Adrenal gland (tissue), 19 donors: ENCODE measurements at regions of chr17 and their contacts with region 1.

Region 1: DNA sequence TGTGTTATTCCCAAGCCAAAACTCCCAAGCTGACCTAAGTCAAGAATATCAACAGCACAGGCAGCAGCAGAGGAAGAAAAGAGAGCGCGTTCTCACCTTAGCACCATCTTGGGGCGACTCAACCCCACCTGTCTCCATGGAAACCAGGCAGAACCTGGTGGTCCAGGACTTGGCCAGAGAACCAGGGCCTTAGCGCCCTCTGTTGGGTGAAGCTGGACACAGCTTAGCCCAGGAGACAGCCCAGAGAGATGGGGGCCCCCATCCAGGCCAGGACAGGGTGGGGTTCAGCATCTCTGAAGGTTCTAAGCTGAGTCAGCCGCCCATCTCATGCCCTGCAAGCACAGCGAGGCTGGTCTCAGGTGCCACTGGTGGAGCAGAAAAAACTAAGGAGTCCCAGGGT is 60.1 kb upstream of the TMEM132E start:
- DNase-seq: peak in 1 of 7 donors; percentile 10
- H3K4me3 ChIP-seq: no peak overlapping the region
- H3K27ac ChIP-seq: no peak overlapping the region
- H3K4me1 ChIP-seq: no peaks in the 10 kb centered on the region
- H3K27me3 ChIP-seq: no peaks in the 10 kb centered on the region
- CTCF ChIP-seq: peak in 5 of 6 experiments; percentile 28 to 49 (median 34)
- POLR2A ChIP-seq: no peak

Region 2: DNA sequence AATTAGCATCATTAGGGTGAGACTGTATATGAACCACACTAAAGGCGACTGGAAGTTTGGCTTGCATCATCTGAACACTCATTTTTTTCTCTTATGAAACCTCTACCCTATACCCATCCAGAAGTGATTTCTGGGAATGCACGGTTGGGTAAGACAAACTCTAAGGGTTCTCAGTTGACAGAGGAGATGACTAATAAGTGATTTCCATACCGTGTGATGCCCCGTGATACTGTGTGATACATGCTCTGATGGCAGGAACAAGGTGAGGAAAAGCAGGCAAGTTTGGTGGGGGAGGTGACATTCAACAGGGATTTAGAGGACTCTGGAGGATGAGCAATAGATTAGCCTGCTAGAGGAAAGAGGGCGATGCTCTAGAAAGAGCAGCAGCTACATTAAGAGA is 420.6 kb before region 1 on chr17:
- intact Hi-C with region 1: no loop called
- DNase-seq: no peak
- H3K4me3 ChIP-seq: no peak overlapping the region
- H3K27ac ChIP-seq: no peak overlapping the region
- H3K4me1 ChIP-seq: no peaks in the 10 kb centered on the region
- H3K27me3 ChIP-seq: peaks cover 4% of the 10 kb centered on the region
- CTCF ChIP-seq: no peak
- POLR2A ChIP-seq: no peak

Region 3: GRCh38 chr17:34420254-34420766 is 99.0 kb before region 1 on chr17:
- intact Hi-C with region 1: loop called in 1 of 2 experiments (anchors 10 kb)
- DNase-seq: peak; percentile 39 to 85 (median 68)
- H3K4me3 ChIP-seq: no peak overlapping the region
- H3K27ac ChIP-seq: no peak overlapping the region
- H3K4me1 ChIP-seq: no peaks in the 10 kb centered on the region
- H3K27me3 ChIP-seq: peaks cover 20% of the 10 kb centered on the region
- CTCF ChIP-seq: peak; percentile 87 to 94 (median 91)
- POLR2A ChIP-seq: no peak